Right cardiac atrium (tissue), 5 donors: ENCODE measurements at regions of chr2 and their contacts with region 1.

Region 1: DNA sequence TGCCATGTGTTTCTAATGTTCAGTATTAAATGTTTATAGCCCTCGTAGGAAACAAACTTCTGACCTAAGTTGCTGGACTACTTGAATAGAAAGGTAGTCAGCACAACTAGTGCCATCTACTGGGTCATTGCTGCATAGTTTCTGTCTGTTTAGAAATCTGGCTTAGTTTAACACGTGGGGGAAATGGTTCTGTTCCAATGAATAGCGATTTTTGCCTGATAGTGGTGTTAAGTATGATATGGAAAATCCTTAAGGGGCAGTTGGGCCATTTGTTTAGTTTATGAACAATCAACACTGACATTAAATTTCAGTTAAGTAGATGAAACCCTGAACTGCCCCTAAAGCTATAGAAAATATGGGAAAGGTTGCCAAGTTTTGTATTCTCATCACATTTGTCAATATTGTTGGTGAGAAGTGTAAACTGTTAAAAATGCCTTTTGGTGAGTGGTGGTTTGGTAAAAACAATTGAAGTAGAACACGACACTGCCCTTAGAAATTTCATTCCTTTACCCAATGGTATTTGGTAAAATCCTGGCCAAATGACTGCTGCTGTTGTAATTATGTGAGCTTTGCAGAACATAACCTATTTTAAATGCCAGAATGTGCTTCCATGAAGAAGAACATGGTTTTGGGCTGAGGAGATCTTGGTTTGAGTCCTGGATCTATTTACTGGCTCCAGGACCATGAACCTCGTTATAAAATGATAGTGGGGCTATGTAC is 13.2 kb downstream of the NABP1 start:
- DNase-seq: no peak
- ATAC-seq: peak; percentile 66 to 82
- H3K4me3 ChIP-seq: no peak overlapping the region
- H3K27ac ChIP-seq: no peak overlapping the region
- H3K4me1 ChIP-seq: peaks cover under 1% of the 10 kb centered on the region
- H3K27me3 ChIP-seq: no peaks in the 10 kb centered on the region

Region 2: DNA sequence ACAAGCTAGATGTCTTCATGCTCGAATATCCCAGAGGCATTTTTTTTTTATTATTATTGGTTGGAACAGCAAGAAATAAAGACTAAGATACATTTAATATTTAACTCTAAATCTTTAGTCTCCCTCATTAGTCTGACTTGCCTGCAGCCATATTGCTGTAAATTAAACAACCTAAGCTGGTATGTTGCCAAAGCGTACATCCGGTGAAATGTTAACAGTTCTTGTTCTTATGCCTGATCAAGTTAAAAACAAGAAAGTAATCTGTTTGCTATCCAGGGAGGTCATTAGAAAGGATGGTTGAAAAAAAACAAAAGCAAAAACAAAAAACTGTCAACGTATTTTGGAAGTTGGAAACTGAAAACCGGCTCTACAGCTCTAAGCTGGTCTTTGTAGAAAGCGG is 139.1 kb before region 1 on chr2:
- intact Hi-C with region 1: loop called in 1 of 4 experiments (anchors 5 kb)
- DNase-seq: no peak
- ATAC-seq: no peak
- H3K4me3 ChIP-seq: no peak overlapping the region
- H3K27ac ChIP-seq: no peak overlapping the region
- H3K4me1 ChIP-seq: no peaks in the 10 kb centered on the region
- H3K27me3 ChIP-seq: peaks cover 3% of the 10 kb centered on the region

Region 3: DNA sequence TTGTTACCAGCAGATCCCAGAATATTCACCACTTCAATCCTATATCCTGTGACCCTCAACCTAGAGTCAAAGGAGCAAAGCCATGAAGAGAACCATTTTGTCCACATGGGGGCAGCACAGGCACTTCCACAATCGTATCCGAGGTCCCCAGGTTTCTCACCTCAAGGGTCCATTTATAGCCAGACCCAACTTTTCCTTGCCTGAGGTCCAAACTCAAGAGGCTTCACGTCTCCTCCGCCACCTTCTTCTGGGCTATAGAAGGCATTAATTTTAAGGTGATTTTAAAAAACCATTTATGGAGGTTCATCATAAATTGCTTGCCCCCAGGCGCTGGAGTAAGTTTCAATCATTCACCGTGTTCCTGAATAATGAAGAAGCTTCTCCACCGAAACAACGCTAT is 124.8 kb before region 1 on chr2:
- intact Hi-C with region 1: loop called (anchors 5 kb)
- DNase-seq: peak; percentile 56 to 76 (median 60)
- ATAC-seq: peak; percentile 66 to 67
- H3K4me3 ChIP-seq: no peak overlapping the region
- H3K27ac ChIP-seq: no peak overlapping the region
- H3K4me1 ChIP-seq: no peaks in the 10 kb centered on the region
- H3K27me3 ChIP-seq: no peaks in the 10 kb centered on the region

Region 4: DNA sequence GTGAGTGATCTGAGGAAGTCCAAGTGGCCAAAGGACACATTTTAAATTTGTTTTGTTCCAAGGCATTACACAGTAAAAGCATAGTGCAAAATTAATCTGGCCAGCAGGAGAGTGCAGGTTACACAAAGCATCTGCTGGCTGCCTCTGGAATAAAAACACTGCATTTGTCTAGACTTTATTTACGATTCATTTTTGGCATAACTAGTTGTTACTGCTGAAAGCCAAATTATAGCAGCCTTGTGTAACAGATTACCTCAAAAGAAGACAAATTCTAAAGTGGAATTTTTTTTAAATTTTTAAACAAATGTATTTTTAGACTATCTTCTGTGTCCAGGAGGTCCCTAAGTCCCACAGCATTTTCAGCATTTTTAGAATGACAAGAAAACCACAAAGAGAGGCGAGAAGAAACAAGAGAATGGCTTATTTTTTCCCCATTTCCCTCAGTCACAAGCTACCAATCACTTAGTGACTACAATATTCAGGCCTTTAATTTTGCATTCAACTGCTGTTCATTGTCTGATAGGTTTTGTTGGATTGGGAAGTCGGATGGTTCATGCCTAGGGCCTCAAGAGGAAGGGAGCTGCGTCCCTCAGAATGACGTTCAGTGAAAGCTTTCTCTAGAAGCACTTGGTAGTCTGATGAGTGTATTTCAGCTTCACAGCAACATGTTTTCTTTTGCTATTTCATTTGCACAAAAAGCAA is 457.6 kb after region 1 on chr2:
- intact Hi-C with region 1: loop called in 1 of 4 experiments (anchors 5 kb)
- DNase-seq: no peak
- ATAC-seq: peak; percentile 23 to 40
- H3K4me3 ChIP-seq: no peak overlapping the region
- H3K27ac ChIP-seq: peak overlapping the region; percentile 37
- H3K4me1 ChIP-seq: no peaks in the 10 kb centered on the region
- H3K27me3 ChIP-seq: no peaks in the 10 kb centered on the region